Aorta (tissue), 5 donors: ENCODE measurements at regions of chr12 and their contacts with region 1.

Region 1: DNA sequence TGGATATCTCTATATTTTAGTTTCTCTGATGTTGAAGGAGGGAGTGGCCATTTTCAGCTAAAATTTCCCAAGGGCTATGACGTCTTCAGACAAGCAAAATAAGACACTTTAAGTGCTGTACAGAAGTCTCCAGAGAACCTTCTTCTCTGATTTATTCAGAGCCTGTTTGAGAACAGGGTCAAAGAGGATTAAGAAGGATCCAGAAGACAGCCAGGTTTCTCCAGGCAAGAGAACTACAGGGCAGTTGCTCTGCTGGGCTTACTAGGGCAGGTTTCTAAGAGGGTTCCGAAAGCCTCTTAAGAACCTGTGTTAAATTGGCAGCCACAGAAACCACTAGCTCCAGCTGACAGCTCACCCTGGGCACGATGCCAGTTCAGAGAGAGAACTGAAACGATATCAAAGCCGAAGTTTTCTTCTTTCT is 1.2 kb downstream of the MGP start:
- DNase-seq: peak; percentile 91
- ATAC-seq: peak; percentile 72
- H3K4me3 ChIP-seq: peak overlapping the region; percentile 84 to 98
- H3K27ac ChIP-seq: peak overlapping the region; percentile 64 to 68
- H3K4me1 ChIP-seq: peaks cover 0 to 2% of the 10 kb centered on the region in 2 donors
- H3K27me3 ChIP-seq: no peaks in the 10 kb centered on the region

Region 2: GRCh38 chr12:14836302-14837210 is 47.9 kb before region 1 on chr12:
- intact Hi-C with region 1: no loop called
- DNase-seq: no peak
- ATAC-seq: peak; percentile 84
- H3K4me3 ChIP-seq: no peak overlapping the region
- H3K27ac ChIP-seq: peak overlapping the region in 1 of 2 donors; percentile 36
- H3K4me1 ChIP-seq: peaks cover 3 to 6% of the 10 kb centered on the region in 2 donors
- H3K27me3 ChIP-seq: no peaks in the 10 kb centered on the region

Region 3: GRCh38 chr12:14930299-14930698 is 45.8 kb after region 1 on chr12:
- intact Hi-C with region 1: loop called in 1 of 2 experiments (anchors 2 kb)
- DNase-seq: no peak
- ATAC-seq: peak; percentile 38
- H3K4me3 ChIP-seq: no peak overlapping the region
- H3K27ac ChIP-seq: no peak overlapping the region
- H3K4me1 ChIP-seq: peaks cover 0 to 2% of the 10 kb centered on the region in 2 donors
- H3K27me3 ChIP-seq: no peaks in the 10 kb centered on the region

Region 4: GRCh38 chr12:14948672-14949071 is 64.2 kb after region 1 on chr12:
- intact Hi-C with region 1: loop called (anchors 5 kb)
- DNase-seq: no peak
- ATAC-seq: peak; percentile 90
- H3K4me3 ChIP-seq: peak overlapping the region in 1 of 2 donors; percentile 76
- H3K27ac ChIP-seq: peak overlapping the region; percentile 92 to 99
- H3K4me1 ChIP-seq: peaks cover 5 to 8% of the 10 kb centered on the region in 2 donors
- H3K27me3 ChIP-seq: no peaks in the 10 kb centered on the region

Region 5: GRCh38 chr12:14960548-14961465 is 76.3 kb after region 1 on chr12:
- intact Hi-C with region 1: no loop called
- DNase-seq: peak in 1 of 2 donors; percentile 60
- ATAC-seq: peak; percentile 74
- H3K4me3 ChIP-seq: peak overlapping the region; percentile 74 to 76
- H3K27ac ChIP-seq: peak overlapping the region in 1 of 2 donors; percentile 50
- H3K4me1 ChIP-seq: peaks cover 0 to 3% of the 10 kb centered on the region in 2 donors
- H3K27me3 ChIP-seq: no peaks in the 10 kb centered on the region